ENCODE measurements at regions of chr6 and their contacts with region 1.

Region 1: DNA sequence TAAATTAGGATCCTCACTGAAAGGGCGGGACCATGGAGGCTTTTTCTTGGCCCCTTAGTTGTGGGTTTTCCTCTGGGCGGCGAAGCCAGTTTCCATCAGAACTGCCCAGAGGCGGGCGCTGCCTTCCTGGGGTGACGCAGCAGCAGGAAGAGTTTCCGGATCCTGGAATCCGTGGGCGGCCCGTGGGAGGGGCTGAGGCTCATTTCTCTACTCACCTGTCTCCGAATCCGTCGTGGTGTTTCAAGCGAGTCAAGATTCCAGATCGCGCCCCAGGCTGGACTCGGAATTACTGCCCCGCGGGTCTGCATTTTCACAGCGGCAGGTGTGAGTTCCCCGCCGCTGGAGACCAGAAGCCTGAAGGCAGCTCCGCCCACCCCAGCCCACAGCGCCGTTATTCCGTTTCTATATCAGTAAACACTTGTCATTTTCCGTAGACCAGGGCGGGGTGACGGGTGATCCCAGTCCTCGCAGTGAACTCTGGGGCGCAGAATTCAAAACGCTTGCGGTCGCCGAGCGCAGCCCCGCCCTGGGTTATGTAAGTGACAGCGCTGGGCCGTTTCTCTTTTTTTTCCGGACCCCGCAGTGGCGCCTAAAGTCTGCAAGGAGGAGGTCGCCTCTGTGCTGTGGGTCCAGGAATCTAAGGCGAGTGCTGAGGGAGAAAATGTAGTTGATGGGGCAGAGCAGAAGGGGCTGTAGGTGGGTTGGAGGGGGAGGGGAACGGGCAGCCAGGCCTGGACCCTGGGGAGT is 27.2 kb upstream of the POU5F1 start:
- DNase-seq: peak; percentile 82 to 98 (median 95)
- ATAC-seq: peak; percentile 80
- H3K4me3 Mint-ChIP-seq: peak overlapping the region; percentile 84 to 99 (median 90)
- H3K27ac Mint-ChIP-seq: peak overlapping the region; percentile 89 to 100 (median 97)
- H3K4me1 Mint-ChIP-seq: peaks cover 17 to 69% (median 63%) of the 10 kb centered on the region in 4 donors
- H3K27me3 Mint-ChIP-seq: no peaks in the 10 kb centered on the region

Region 2: GRCh38 chr6:31265926-31266325 is 68.2 kb after region 1 on chr6:
- POLR2A ChIA-PET with region 1: interaction called, 29 read pairs
- DNase-seq: peak in 1 of 10 donors; percentile 9
- ATAC-seq: peak in 1 of 2 donors; percentile 20
- H3K4me3 Mint-ChIP-seq: peak overlapping the region in 2 of 10 donors; percentile 8 to 59
- H3K27ac Mint-ChIP-seq: peak overlapping the region in 9 of 10 donors; percentile 14 to 87 (median 66)
- H3K4me1 Mint-ChIP-seq: peaks cover 28 to 53% (median 48%) of the 10 kb centered on the region in 4 donors
- H3K27me3 Mint-ChIP-seq: no peaks in the 10 kb centered on the region

Region 3: GRCh38 chr6:31308050-31308844 is 110.5 kb after region 1 on chr6:
- POLR2A ChIA-PET with region 1: interaction called, 29 read pairs
- DNase-seq: peak; percentile 52 to 89 (median 72)
- ATAC-seq: peak; percentile 92 to 96
- H3K4me3 Mint-ChIP-seq: peak overlapping the region; percentile 76 to 94 (median 88)
- H3K27ac Mint-ChIP-seq: peak overlapping the region in 8 of 10 donors; percentile 54 to 96 (median 83)
- H3K4me1 Mint-ChIP-seq: peaks cover 0 to 12% (median 5%) of the 10 kb centered on the region in 4 donors
- H3K27me3 Mint-ChIP-seq: peaks cover 0 to 9% (median 5%) of the 10 kb centered on the region in 5 donors

Region 4: GRCh38 chr6:31366693-31367470 is 169.2 kb after region 1 on chr6:
- POLR2A ChIA-PET with region 1: interaction called, 60 read pairs
- DNase-seq: peak; percentile 74 to 94 (median 88)
- ATAC-seq: peak; percentile 98
- H3K4me3 Mint-ChIP-seq: peak overlapping the region; percentile 79 to 91 (median 84)
- H3K27ac Mint-ChIP-seq: peak overlapping the region; percentile 53 to 92 (median 87)
- H3K4me1 Mint-ChIP-seq: peaks cover 3 to 18% (median 17%) of the 10 kb centered on the region in 4 donors
- H3K27me3 Mint-ChIP-seq: peaks cover 0 to 19% (median 4%) of the 10 kb centered on the region in 5 donors